Esophagus squamous epithelium (tissue), 5 donors: ENCODE measurements at regions of chr3 and their contacts with region 1.

Region 1: DNA sequence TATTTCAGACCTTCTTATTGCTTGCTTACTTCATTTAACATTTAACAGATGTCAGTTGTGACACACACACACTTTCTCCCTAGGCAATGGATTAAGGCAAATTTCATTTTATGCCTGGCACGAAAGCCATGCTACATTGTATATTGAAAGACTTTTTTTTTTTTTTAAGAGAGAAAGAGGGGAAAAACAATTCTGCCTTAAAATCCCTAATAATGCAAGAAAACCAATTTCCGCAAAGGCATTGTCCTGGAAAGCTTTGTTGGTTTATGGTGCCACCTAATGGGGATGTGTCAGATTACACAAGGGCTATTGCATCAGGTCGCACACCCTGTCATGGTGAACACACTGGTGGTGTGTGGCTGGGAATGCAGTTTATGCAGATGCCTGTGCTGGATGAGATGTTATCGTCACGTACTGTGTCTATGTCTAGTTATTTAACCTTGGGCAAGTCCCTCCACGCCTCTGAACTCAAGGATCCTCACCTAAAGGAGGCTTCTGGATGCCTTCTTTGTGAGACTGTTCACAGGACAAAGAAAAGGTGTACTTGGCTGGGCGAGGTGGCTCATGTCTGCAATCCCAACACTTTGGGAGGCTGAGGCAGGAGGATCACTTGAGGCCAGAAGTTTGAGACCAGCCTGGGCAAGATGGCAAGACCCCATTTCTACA is 37.3 kb upstream of the RFTN1 start:
- DNase-seq: peak; percentile 1
- H3K4me3 ChIP-seq: peak overlapping the region in 2 of 4 donors; percentile 4 to 22
- H3K27ac ChIP-seq: peak overlapping the region in 1 of 4 donors; percentile 48
- H3K4me1 ChIP-seq: peaks cover 0 to 12% (median 6%) of the 10 kb centered on the region in 3 donors
- H3K27me3 ChIP-seq: no peaks in the 10 kb centered on the region
- CTCF ChIP-seq: peak; percentile 75 to 91 (median 78)
- POLR2A ChIP-seq: no peak

Region 2: DNA sequence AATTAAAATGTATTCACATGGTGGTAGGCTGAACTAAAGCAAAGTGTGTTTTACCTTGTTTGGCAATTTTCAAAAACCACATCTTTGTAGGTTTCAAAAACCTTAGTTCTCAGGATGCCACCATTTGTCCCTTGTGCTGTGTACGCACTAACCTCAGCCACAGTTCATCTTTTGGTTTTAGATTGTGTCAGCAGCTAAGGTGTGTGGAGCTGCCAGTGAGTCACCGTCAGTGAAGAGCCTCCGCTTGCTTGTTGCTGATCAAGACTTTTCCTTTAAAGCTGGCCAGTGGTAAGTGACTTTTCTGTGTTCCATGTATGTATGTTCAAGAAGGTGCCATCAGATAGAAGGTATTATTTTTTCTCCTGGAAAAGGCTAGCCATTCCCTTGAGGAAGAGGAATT is 264.6 kb before region 1 on chr3:
- intact Hi-C with region 1: loop called (anchors 5 kb)
- DNase-seq: no peak
- H3K4me3 ChIP-seq: peak overlapping the region; percentile 9 to 48 (median 20)
- H3K27ac ChIP-seq: peak overlapping the region; percentile 46 to 73 (median 62)
- H3K4me1 ChIP-seq: peaks cover 0 to 12% (median 0%) of the 10 kb centered on the region in 3 donors
- H3K27me3 ChIP-seq: no peaks in the 10 kb centered on the region
- CTCF ChIP-seq: no peak
- POLR2A ChIP-seq: peak in 2 of 4 donors; percentile 24 to 51